ENCODE measurements at regions of chr1 and their contacts with region 1.

Region 1: DNA sequence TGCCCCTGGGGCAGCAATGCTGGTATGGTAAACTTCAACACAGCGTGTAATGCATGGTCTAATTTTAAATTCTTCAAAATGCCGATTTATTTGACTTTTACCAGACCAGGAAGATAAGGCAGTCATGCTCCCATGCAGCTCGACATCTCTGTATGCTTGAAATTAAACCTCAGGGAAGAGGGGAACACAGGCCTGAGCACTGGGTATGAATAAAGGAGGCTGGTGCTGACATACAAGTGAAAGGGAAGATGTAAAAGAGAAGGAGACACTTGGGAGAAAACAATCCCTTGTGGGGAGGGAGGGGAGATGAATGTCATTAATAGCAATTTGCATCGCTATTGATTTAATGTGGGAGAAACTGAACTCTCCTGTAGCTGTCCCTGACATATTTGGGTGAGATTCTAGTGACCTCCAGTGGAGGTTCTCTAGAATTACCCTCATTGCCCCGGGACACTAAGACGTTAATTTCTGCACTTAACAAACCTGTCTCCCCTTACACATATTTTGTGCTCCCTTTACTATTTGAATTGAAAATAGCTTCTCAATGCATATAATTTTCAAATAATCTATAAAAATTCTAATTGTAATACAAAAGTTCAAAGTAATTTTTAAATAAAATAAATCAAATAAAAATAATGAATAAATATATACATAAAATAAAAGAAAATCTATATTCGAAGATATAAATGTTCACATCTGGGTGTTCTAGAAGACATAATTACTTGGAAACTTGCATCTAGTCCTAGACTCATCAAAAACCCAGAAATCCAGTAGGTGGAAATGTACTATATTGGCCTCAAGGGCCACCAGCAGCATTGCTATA is 283.1 kb downstream of the LMX1A start:
- DNase-seq: peak; percentile 80
- H3K4me3 Mint-ChIP-seq: no peak overlapping the region
- H3K27ac Mint-ChIP-seq: no peak overlapping the region
- H3K4me1 Mint-ChIP-seq: no peaks in the 10 kb centered on the region
- H3K27me3 Mint-ChIP-seq: no peaks in the 10 kb centered on the region
- CTCF ChIP-seq: peak; percentile 95

Region 2: GRCh38 chr1:163410073-163410999 is 1663.1 kb before region 1 on chr1:
- CTCF ChIA-PET with region 1: interaction called, 34 read pairs
- POLR2A ChIA-PET with region 1: no interaction called
- intact Hi-C with region 1: loop called (anchors 1 kb)
- DNase-seq: peak; percentile 75
- H3K4me3 Mint-ChIP-seq: peak overlapping the region; percentile 26
- H3K27ac Mint-ChIP-seq: no peak overlapping the region
- H3K4me1 Mint-ChIP-seq: peaks cover 8% of the 10 kb centered on the region
- H3K27me3 Mint-ChIP-seq: peaks cover 8% of the 10 kb centered on the region
- CTCF ChIP-seq: peak; percentile 91

Region 3: GRCh38 chr1:163561580-163562295 is 1511.7 kb before region 1 on chr1:
- CTCF ChIA-PET with region 1: interaction called, 13 read pairs
- POLR2A ChIA-PET with region 1: no interaction called
- intact Hi-C with region 1: no loop called
- DNase-seq: peak; percentile 51
- H3K4me3 Mint-ChIP-seq: no peak overlapping the region
- H3K27ac Mint-ChIP-seq: no peak overlapping the region
- H3K4me1 Mint-ChIP-seq: no peaks in the 10 kb centered on the region
- H3K27me3 Mint-ChIP-seq: no peaks in the 10 kb centered on the region
- CTCF ChIP-seq: peak; percentile 42

Region 4: DNA sequence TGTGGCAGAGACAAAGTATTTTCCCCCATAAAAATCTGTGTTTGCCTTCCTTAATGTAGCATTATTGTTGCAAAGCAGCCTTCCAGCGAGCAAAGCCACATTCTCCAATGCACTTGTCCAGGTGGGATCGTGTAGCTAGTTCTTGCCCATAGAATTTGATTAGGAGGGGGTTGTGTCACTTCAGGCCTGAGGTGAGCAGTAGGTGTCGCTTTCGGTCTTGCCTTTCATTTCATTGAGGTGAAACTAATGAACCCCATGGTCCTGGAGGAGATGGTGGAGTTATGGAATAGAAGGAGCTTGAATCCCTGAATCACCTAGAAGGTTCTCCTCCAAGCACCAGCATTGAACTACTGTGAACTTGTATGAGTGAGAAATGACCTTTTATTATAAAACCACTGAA is 833.3 kb before region 1 on chr1:
- CTCF ChIA-PET with region 1: interaction called, 11 read pairs
- POLR2A ChIA-PET with region 1: no interaction called
- intact Hi-C with region 1: loop called (anchors 10 kb)
- DNase-seq: peak; percentile 52
- H3K4me3 Mint-ChIP-seq: no peak overlapping the region
- H3K27ac Mint-ChIP-seq: no peak overlapping the region
- H3K4me1 Mint-ChIP-seq: no peaks in the 10 kb centered on the region
- H3K27me3 Mint-ChIP-seq: no peaks in the 10 kb centered on the region
- CTCF ChIP-seq: peak; percentile 30

Region 5: DNA sequence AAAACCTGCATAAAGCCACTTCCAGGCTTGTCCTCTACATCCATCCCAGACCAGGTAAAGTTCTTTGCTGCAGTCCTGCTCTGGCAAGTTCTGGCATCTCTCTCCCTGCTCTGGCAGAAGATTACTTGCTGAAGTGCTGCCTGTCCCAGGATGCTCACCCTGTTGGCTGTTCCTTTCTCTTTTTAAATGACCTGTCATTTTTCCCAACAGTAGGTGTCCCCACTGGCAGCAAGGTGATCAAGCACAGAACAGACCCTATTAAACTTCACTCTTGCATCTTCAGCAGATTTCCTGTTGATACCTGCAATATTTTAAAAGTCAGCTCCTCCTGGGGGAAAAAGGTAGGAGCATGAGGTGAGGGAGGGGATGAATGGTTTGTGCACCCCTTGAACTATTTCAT is 181.8 kb before region 1 on chr1:
- CTCF ChIA-PET with region 1: no interaction called
- POLR2A ChIA-PET with region 1: no interaction called
- intact Hi-C with region 1: loop called (anchors 5 kb)
- DNase-seq: peak; percentile 14
- H3K4me3 Mint-ChIP-seq: no peak overlapping the region
- H3K27ac Mint-ChIP-seq: no peak overlapping the region
- H3K4me1 Mint-ChIP-seq: no peaks in the 10 kb centered on the region
- H3K27me3 Mint-ChIP-seq: no peaks in the 10 kb centered on the region
- CTCF ChIP-seq: peak; percentile 10

Region 6: DNA sequence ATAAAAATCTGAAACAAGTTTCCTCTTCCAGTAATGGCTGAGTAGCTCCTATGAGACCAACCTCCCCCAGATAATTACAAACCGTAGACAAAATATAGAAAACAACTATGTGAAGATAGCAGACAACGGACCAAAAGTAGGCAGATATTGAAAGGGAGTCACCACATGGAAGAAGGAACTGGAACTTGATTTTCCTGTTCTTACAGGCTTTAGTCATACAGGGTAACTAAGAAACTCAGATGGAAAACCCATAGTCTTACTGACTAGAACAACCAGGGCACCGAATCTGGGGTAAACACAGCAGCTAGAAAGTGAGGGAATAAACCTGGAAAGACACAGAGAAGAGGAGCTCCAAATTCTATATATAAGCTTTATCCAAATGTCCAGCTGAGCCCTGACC is 257.1 kb after region 1 on chr1:
- CTCF ChIA-PET with region 1: no interaction called
- POLR2A ChIA-PET with region 1: no interaction called
- intact Hi-C with region 1: no loop called
- DNase-seq: no peak
- H3K4me3 Mint-ChIP-seq: no peak overlapping the region
- H3K27ac Mint-ChIP-seq: no peak overlapping the region
- H3K4me1 Mint-ChIP-seq: no peaks in the 10 kb centered on the region
- H3K27me3 Mint-ChIP-seq: peaks cover 32% of the 10 kb centered on the region
- CTCF ChIP-seq: no peak

Region 7: DNA sequence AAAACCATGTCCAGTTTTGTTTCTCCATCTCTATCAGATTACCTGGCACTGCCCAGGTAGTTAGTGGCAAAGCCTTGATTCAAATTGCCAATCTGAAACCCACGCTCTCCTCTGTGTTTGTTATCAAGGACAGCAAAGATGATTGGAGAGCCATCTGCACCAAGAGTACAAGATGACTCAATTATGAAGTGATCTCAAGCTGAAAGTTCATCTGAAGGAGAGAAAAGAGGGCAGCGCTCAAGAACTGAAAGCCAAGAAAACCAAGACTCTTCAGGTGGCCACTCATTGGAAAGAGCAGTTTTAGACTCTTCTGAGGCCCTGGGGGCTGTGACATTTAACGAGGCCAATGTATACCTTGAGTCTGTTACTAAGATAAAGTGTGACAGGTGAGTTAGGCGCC is 357.7 kb after region 1 on chr1:
- CTCF ChIA-PET with region 1: no interaction called
- POLR2A ChIA-PET with region 1: no interaction called
- intact Hi-C with region 1: no loop called
- DNase-seq: no peak
- H3K4me3 Mint-ChIP-seq: no peak overlapping the region
- H3K27ac Mint-ChIP-seq: no peak overlapping the region
- H3K4me1 Mint-ChIP-seq: no peaks in the 10 kb centered on the region
- H3K27me3 Mint-ChIP-seq: peaks cover 8% of the 10 kb centered on the region
- CTCF ChIP-seq: no peak

Measured in MCF 10A (cell line).